ENCODE measurements at regions of chr12 and their contacts with region 1.

Region 1: GRCh38 chr12:26937875-26938700 is at the starts of genes FGFR1OP2 and INTS13:
- DNase-seq: peak; percentile 99
- ATAC-seq: peak; percentile 92
- H3K4me3 Mint-ChIP-seq: peak within 1 kb of the TSS; percentile 98
- H3K27ac Mint-ChIP-seq: peak within 1 kb of the TSS; percentile 99
- H3K4me1 Mint-ChIP-seq: peaks cover 56% of the 10 kb centered on the region
- H3K27me3 Mint-ChIP-seq: no peaks in the 10 kb centered on the region
- total RNA-seq, gene FGFR1OP2: 38.5 to 43.1 TPM
- total RNA-seq, gene INTS13: 66.3 to 71.5 TPM

Region 2: DNA sequence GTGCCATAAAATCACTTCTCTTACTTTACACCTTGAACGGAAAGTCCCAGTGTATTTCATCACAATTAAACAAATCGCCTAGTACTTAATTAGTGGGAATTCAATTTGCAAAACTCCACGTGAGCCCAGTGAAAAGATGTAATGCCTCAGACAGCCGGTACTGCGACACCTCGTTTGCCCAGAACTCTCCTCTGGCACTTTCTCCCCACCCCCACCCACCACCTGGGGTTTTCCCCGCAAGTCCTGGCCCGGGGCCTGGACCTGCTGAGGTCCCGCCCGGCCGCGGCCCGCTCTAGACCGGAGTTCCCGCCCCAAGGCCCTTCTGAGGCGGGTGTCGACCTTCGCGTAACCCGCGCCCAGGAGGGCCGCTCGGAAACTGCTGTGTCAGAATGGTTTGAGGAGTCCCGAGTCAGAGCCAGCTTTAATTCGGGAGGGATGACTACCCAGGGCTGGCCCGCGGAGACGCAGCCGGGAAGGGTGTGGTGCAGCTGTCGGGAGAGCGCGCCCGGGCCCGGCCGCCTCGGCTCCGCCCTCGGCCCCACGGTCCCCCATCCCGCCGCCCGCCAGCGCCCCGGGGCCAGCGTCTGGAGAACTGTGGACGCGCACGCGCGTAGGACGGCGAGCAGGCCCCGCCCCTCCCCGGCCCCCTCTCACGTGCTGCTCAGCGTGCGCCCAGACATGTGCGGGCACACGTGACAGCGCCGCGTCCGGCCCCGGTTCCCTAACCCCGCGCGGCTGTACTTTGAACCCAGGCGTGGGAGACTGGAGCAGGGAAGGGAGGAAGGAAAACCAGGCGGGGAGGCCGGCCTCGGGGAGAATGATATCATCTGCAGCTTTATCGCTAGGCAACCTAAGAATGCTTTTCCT is 824.0 kb before region 1 on chr12:
- CTCF ChIA-PET with region 1: no interaction called
- POLR2A ChIA-PET with region 1: no interaction called
- intact Hi-C with region 1: loop called in 1 of 2 experiments (anchors 2 kb)
- DNase-seq: peak; percentile 87
- ATAC-seq: peak; percentile 88
- H3K4me3 Mint-ChIP-seq: peak overlapping the region; percentile 69
- H3K27ac Mint-ChIP-seq: peak overlapping the region; percentile 25
- H3K4me1 Mint-ChIP-seq: peaks cover 11% of the 10 kb centered on the region
- H3K27me3 Mint-ChIP-seq: peaks cover 37% of the 10 kb centered on the region

Region 3: GRCh38 chr12:26948309-26948708 is 10.2 kb after region 1 on chr12:
- CTCF ChIA-PET with region 1: interaction called, 5 read pairs
- POLR2A ChIA-PET with region 1: no interaction called
- intact Hi-C with region 1: loop called in 1 of 2 experiments (anchors 1 kb)
- DNase-seq: no peak
- ATAC-seq: no peak
- H3K4me3 Mint-ChIP-seq: no peak overlapping the region
- H3K27ac Mint-ChIP-seq: no peak overlapping the region
- H3K4me1 Mint-ChIP-seq: peaks cover 54% of the 10 kb centered on the region
- H3K27me3 Mint-ChIP-seq: no peaks in the 10 kb centered on the region

Region 4: DNA sequence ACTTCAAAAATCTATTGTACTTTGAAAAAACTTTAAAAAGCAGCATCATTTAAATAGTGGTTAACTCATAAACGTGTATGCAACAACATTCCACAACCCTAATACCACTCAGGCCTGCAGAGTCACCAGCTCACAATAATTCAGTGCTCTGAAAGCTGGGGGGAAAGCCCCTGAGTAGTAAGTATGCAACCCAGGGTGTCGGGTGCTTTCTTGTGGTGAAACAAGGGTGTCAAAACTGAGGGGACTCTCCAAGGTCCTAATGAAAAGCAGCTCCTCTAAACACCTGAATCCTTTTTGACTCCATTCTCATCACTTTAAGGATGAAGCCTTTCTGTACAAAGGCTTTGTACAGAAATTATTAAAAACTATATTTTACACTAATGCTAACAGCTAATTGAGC is 33.9 kb after region 1 on chr12:
- CTCF ChIA-PET with region 1: interaction called, 4 read pairs
- POLR2A ChIA-PET with region 1: interaction called, 12 read pairs
- intact Hi-C with region 1: loop called (anchors 1 kb)
- DNase-seq: peak; percentile 83
- ATAC-seq: peak; percentile 100
- H3K4me3 Mint-ChIP-seq: no peak overlapping the region
- H3K27ac Mint-ChIP-seq: no peak overlapping the region
- H3K4me1 Mint-ChIP-seq: peaks cover 22% of the 10 kb centered on the region
- H3K27me3 Mint-ChIP-seq: no peaks in the 10 kb centered on the region

Region 5: DNA sequence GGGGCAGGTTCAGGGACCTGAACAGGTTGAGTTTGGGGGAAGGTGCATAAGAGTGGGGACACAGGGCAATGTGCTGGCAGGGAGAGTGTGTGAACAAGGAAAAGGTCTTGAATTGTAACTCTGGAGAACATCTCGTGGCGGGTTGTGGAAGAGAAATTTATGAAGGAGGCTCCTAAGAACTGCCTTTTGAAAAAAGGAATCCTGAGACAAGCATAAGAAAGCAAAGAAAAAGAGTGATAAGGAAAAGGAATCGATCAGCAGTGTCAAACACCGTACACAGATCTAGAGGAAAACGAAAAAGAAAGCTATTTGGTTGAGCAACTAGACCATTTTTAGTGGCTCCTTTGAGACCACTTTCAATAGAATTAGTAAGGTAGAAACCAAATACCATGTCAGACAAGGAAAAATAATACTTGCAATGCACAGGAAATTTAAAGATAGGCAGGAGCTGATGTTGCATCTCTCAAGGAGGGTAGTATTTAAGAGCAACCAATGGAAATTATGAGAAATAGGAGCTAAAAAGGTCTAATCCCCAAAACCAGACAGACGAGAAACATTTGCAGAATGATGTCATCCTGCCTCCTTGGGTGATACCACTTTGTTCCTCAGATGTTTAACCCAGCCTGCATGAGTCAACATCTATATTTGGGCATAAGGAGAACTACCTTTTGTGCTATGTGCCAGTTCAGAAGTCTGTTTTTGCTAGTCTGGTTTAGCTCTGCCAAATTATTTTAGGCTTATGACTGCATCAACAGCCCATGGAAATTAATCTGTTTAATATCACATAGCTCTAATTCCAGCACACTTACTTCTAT is 241.5 kb after region 1 on chr12:
- CTCF ChIA-PET with region 1: no interaction called
- POLR2A ChIA-PET with region 1: no interaction called
- intact Hi-C with region 1: loop called in 1 of 2 experiments (anchors 5 kb)
- DNase-seq: peak; percentile 58
- ATAC-seq: peak; percentile 95
- H3K4me3 Mint-ChIP-seq: peak overlapping the region; percentile 7
- H3K27ac Mint-ChIP-seq: peak overlapping the region; percentile 90
- H3K4me1 Mint-ChIP-seq: peaks cover 41% of the 10 kb centered on the region
- H3K27me3 Mint-ChIP-seq: no peaks in the 10 kb centered on the region

Region 6: GRCh38 chr12:27220057-27220987 is 282.2 kb after region 1 on chr12:
- CTCF ChIA-PET with region 1: no interaction called
- POLR2A ChIA-PET with region 1: no interaction called
- intact Hi-C with region 1: no loop called
- DNase-seq: peak; percentile 46
- ATAC-seq: peak; percentile 93
- H3K4me3 Mint-ChIP-seq: no peak overlapping the region
- H3K27ac Mint-ChIP-seq: peak overlapping the region; percentile 84
- H3K4me1 Mint-ChIP-seq: peaks cover 20% of the 10 kb centered on the region
- H3K27me3 Mint-ChIP-seq: peaks cover 4% of the 10 kb centered on the region

Region 7: DNA sequence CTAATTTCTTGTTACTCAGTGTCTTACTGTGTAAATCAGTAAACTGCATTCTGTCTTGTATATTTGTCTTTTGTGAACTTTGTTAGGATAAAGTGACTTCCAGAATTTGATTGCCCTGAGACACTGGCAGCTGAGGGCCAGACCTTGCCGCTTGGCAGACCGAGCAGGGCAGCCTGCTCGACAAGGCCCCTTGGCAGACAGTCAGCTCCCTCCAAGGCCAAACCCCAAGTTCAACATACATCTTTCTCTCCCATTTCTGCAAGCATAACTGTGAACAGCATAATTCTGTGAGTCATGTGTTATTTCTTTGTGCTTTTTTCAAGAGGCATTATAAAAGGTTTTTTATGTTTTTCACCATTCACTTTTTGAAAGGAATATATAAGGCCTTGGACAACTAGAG is 355.4 kb after region 1 on chr12:
- CTCF ChIA-PET with region 1: no interaction called
- POLR2A ChIA-PET with region 1: no interaction called
- intact Hi-C with region 1: no loop called
- DNase-seq: no peak
- ATAC-seq: no peak
- H3K4me3 Mint-ChIP-seq: no peak overlapping the region
- H3K27ac Mint-ChIP-seq: no peak overlapping the region
- H3K4me1 Mint-ChIP-seq: peaks cover 8% of the 10 kb centered on the region
- H3K27me3 Mint-ChIP-seq: no peaks in the 10 kb centered on the region

Region 8: DNA sequence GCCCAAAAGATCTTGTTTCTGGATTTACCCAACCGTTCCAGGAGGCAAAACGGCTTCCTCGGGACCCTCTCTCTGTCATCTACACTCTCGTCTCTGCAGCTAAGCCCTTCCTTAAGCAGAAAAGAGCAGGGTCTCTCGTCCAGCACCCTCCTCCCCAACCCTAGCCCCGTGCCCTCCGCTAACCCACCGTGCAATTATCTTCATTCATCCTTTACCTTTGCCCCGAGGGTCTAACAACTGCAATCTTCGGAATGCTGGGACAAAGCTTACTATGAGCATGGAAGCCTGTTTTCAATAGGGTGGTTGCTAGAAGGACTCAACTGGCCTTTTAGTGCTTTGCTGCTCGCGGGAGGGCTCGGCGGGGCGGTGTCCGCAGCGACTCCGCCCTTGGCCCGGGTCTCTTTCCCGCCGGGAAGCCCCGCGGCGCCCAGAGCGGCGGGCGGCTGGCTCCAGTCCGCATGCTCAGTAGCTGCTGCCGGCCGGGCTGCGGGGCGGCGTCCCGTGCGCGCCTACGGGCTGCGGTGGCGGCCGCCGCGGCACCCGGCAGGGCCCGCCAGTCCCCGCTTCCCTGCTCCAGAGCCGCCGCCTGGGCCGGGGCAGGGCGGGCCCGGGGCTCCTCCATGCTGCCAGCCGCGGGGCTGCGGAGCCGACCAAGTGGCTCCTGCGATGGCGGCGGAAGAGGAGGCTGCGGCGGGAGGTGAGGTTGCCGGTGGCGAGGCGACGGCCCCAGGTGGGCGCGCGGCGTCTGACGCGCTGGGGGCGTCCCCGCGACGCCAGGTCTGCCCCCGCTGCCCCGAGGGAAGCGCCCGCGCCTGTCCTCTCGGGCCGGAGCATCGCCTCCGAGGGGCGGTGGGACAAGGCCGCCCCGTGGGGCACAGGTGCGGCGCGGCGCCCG is 394.6 kb after region 1 on chr12 and contains the start of gene BMAL2:
- CTCF ChIA-PET with region 1: no interaction called
- POLR2A ChIA-PET with region 1: no interaction called
- intact Hi-C with region 1: loop called in 1 of 2 experiments (anchors 1 kb)
- DNase-seq: peak; percentile 66
- ATAC-seq: peak; percentile 28
- H3K4me3 Mint-ChIP-seq: peak within 1 kb of the TSS; percentile 82
- H3K27ac Mint-ChIP-seq: peak within 1 kb of the TSS; percentile 90
- H3K4me1 Mint-ChIP-seq: peaks cover 42% of the 10 kb centered on the region
- H3K27me3 Mint-ChIP-seq: peaks cover 30% of the 10 kb centered on the region
- total RNA-seq, gene BMAL2: 10.9 to 13.2 TPM

Region 9: DNA sequence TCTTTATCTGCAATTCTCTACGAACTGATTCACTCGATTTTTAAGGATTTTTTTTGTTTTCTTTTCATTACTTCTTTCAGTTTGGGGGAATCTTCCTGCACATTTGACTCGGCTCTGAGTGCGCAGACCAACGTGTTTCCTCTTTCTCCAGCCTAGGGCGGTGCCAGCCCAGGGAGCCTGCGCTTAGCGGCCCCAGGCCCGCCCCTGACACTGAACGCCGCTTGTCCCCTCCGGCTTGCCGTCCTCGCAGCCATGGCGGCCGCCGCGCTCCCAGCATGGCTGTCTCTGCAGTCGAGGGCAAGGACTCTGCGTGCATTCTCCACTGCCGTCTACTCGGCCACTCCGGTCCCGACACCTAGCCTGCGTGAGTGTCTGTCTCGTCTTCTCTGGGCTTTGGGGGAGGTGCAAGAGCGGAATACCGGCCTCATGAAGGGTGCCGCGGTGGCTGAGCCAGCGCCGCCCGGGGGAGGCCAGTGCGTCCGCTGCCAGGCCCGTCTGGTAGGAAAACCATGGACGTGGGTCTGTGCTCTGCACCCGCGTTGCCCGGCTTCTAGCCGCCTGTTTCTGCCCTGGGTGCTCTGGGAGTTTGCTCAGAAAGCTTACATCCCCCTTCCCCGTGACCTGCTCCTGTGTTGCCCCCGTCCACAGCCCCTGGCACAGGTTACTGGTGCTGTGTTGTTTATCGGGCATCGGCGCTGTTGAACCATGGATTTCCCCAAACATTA is 772.7 kb after region 1 on chr12 and contains the start of gene MRPS35:
- CTCF ChIA-PET with region 1: no interaction called
- POLR2A ChIA-PET with region 1: no interaction called
- intact Hi-C with region 1: loop called in 1 of 2 experiments (anchors 10 kb)
- DNase-seq: peak; percentile 95
- ATAC-seq: peak; percentile 98
- H3K4me3 Mint-ChIP-seq: peak within 1 kb of the TSS; percentile 94
- H3K27ac Mint-ChIP-seq: peak within 1 kb of the TSS; percentile 94
- H3K4me1 Mint-ChIP-seq: peaks cover 28% of the 10 kb centered on the region
- H3K27me3 Mint-ChIP-seq: no peaks in the 10 kb centered on the region
- total RNA-seq, gene MRPS35: 58.5 to 62.1 TPM

Measured in activated CD4-positive, alpha-beta T cell treated with anti-CD3 and anti-CD28 coated beads for 36 hours (primary cell).